ENCODE measurements at regions of chr10 and their contacts with region 1.

Region 1: DNA sequence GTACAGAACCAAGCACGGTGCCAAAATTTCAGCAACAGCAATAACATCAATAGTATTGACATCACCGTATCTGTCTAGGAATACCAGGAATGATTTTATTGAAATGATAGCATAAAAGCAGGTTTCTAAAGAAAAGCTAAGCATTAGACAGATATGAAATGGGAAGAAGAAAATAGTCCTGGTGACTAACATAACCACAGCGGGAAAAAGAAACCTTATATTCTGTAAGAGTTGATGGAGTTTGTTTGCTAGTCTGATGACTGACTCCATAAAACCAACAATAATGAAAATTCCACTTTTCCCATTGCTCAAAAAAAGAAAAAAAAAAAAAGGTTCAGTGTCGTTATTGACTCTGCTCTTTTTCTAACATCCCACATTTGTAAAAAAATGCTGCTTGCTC is 668.3 kb downstream of the IPMK start:
- DNase-seq: no peak
- H3K4me3 ChIP-seq: no peak overlapping the region
- H3K27ac ChIP-seq: no peak overlapping the region
- H3K4me1 ChIP-seq: no peaks in the 10 kb centered on the region
- H3K27me3 ChIP-seq: no peaks in the 10 kb centered on the region
- CTCF ChIP-seq: no peak
- EP300 ChIP-seq: no peak
- POLR2A ChIP-seq: no peak

Region 2: GRCh38 chr10:56646329-56647111 is 952.9 kb before region 1 on chr10:
- in situ Hi-C with region 1: no loop called
- intact Hi-C with region 1: loop called (anchors 5 kb)
- DNase-seq: no peak
- H3K4me3 ChIP-seq: no peak overlapping the region
- H3K27ac ChIP-seq: no peak overlapping the region
- H3K4me1 ChIP-seq: no peaks in the 10 kb centered on the region
- H3K27me3 ChIP-seq: no peaks in the 10 kb centered on the region
- CTCF ChIP-seq: no peak
- EP300 ChIP-seq: no peak
- POLR2A ChIP-seq: no peak

Region 3: GRCh38 chr10:57562211-57562610 is 37.2 kb before region 1 on chr10:
- in situ Hi-C with region 1: no loop called
- intact Hi-C with region 1: no loop called
- DNase-seq: no peak
- H3K4me3 ChIP-seq: no peak overlapping the region
- H3K27ac ChIP-seq: no peak overlapping the region
- H3K4me1 ChIP-seq: no peaks in the 10 kb centered on the region
- H3K27me3 ChIP-seq: no peaks in the 10 kb centered on the region
- CTCF ChIP-seq: no peak
- EP300 ChIP-seq: no peak
- POLR2A ChIP-seq: no peak

Measured in transverse colon (tissue), 4 donors.